Colonic mucosa (tissue), 4 donors: ENCODE measurements at regions of chr19 and their contacts with region 1.

Region 1: GRCh38 chr19:16382775-16383543 is 58.3 kb downstream of the KLF2 start:
- DNase-seq: peak; percentile 88
- H3K4me3 ChIP-seq: no peak overlapping the region
- H3K27ac ChIP-seq: peak overlapping the region; percentile 52
- H3K4me1 ChIP-seq: no peaks in the 10 kb centered on the region
- H3K27me3 ChIP-seq: no peaks in the 10 kb centered on the region
- CTCF ChIP-seq: peak; percentile 63

Region 2: DNA sequence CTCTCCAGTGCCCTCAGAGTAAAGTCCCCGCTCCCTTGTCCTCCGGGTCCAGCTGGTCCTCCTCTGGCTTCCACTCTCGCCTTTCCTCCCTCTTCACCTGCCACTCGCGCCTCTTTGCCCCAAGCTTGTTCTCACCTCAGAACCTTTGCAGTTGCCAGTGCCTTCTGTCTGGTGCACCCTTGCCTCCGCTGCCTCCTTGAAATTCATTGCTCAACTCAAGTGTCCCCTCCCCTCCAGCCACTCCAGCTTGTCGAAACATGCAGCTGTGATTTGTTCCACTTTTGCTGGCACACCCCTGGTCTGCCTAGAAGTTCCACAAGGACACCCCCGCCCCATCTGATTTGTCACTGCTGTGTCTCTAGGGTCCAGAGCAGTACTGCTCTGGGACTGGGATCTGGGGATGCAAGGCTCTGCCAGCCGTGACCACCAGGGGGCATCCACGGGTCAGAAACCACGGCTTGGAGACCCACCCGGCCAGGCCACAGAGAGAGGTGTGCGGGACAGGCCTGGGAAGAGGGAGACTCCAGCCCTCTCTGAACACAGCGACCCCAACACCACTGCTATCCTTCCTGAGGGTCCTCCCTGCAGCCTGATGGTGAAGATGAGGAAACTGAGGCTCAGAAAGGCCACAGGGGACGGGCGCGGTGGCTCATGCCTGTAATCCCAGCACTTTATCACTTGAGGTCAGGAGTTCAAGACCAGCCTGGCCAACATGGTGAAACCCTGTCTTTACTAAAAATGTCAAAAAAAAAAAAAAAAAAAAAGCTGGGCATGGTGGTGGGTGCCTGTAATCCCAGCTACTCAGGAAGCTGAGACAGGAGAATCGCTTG is 135.4 kb before region 1 on chr19:
- intact Hi-C with region 1: loop called (anchors 1 kb)
- DNase-seq: peak; percentile 86
- H3K4me3 ChIP-seq: no peak overlapping the region
- H3K27ac ChIP-seq: no peak overlapping the region
- H3K4me1 ChIP-seq: no peaks in the 10 kb centered on the region
- H3K27me3 ChIP-seq: no peaks in the 10 kb centered on the region
- CTCF ChIP-seq: peak; percentile 88

Region 3: DNA sequence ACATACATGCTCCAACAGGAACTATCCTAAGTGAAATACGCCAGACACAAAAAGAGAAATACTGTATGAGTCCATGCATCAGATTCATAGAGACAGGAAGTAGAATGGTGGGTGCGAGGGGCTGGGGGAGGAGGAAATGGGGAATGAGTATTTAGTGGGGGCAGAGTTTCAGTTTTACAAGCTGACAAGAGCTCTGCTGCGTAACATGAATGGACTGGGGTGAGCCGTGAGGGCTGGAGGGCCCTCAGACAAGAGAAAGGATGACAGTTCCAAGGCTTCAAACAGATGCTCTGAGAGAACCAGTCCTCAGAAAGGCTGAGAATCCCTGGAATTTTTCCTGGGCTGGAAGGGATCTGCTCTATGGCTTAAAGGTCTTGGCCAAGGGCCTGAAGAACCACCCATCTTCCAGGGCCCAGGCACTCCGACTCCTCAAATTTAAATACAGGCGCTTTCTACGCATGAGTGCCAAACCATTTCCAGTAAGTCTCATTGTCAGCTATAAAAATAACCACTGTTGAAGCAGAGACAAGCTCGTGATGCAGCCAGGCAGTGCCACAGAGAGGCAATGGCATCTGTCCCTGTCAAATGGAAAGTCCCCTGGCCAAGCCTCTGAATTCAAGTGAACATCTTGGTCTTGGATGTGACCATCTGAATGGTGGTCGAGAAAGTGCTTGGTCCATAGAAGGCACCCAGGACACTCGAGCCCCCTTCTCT is 40.8 kb before region 1 on chr19:
- intact Hi-C with region 1: loop called (anchors 5 kb)
- DNase-seq: no peak
- H3K4me3 ChIP-seq: no peak overlapping the region
- H3K27ac ChIP-seq: peak overlapping the region; percentile 32
- H3K4me1 ChIP-seq: no peaks in the 10 kb centered on the region
- H3K27me3 ChIP-seq: no peaks in the 10 kb centered on the region
- CTCF ChIP-seq: no peak